ENCODE measurements at regions of chr1 and their contacts with region 1.

Region 1: GRCh38 chr1:25905680-25906643 is at the start of gene STMN1:
- DNase-seq: peak; percentile 94
- H3K4me3 Mint-ChIP-seq: peak within 1 kb of the TSS; percentile 94
- H3K27ac Mint-ChIP-seq: peak within 1 kb of the TSS; percentile 90
- H3K4me1 Mint-ChIP-seq: peaks cover 29% of the 10 kb centered on the region
- H3K27me3 Mint-ChIP-seq: no peaks in the 10 kb centered on the region
- total RNA-seq, gene STMN1: 708 to 746 TPM

Region 2: DNA sequence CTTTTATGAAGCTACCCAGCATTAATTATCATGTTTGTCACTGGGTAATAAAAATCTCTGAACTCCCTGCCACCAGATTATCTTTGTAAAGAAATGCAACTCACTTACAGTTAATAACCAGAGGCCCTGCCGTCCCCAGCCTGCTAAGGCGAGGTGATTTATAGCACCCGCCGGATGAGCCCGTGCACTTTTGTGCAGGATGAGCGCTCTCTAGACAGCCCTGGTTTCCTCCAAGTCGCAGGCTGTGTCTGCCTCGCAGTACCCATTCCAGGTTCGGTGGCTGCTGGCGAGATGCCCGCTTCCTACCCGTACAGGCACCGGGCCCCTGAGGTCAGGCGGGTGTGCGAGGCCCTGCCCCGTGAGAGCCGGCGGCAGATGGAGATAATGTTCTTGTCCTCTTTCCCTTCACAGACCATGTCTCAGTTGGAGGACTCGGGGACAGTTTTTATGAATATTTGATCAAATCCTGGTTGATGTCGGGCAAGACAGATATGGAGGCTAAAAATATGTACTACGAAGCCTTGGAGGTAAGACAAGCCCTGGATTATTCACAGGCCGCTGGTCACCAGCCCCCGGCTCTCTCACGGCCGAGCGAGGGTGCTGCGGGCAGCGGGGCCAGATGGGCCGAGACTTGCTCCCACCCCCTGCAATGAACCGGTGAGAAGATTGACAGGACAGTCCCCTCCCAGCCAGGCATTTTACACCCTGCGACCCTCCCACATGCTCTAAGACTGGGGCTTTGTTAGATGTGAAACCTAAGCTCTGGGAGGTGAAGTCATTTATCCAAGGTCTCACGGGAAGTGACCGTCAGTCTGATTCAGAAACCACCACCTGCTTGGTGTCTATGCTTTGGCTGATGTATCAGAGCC is 134.5 kb before region 1 on chr1:
- CTCF ChIA-PET with region 1: no interaction called
- intact Hi-C with region 1: no loop called
- DNase-seq: peak; percentile 69
- H3K4me3 Mint-ChIP-seq: peak overlapping the region; percentile 49
- H3K27ac Mint-ChIP-seq: peak overlapping the region; percentile 62
- H3K4me1 Mint-ChIP-seq: peaks cover 81% of the 10 kb centered on the region
- H3K27me3 Mint-ChIP-seq: no peaks in the 10 kb centered on the region

Region 3: DNA sequence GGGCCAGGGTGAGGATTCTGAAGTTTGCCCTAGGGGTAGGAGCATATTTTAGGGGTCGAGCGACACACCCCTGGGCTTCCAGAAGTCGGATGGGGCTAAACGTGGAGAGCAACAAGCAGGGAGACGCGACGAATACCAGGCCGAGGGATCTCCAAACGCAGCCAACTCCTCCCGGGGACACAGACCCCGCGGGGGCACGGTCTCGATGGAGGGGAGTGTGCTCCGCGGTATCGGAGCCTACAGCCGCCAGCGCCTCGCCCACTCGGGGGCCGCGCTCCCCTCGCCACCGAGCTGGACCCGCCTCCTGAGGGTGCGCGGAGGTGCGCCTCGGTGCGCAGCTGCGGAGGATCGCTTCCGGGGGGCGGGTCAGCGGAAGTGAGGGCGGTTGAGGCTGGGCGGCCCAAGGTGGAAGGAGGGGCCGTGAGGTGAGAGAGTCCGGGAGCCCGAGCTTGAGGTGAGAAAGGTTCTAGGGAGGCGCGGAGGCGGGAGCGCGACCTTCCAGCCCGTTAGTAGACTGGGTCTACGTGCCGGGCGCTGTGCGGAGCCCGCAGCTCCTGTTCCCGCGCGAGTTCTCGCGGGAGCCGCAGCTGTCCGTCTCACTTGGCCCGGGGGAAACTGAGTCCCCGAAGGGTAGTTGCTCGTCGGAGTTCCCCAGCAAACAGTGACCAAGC is 86.3 kb before region 1 on chr1 and contains the start of gene MTFR1L:
- CTCF ChIA-PET with region 1: no interaction called
- intact Hi-C with region 1: loop called (anchors 5 kb)
- DNase-seq: peak; percentile 94
- H3K4me3 Mint-ChIP-seq: peak within 1 kb of the TSS; percentile 86
- H3K27ac Mint-ChIP-seq: peak within 1 kb of the TSS; percentile 88
- H3K4me1 Mint-ChIP-seq: peaks cover 36% of the 10 kb centered on the region
- H3K27me3 Mint-ChIP-seq: no peaks in the 10 kb centered on the region
- total RNA-seq, gene MTFR1L: 22.2 to 23.5 TPM

Region 4: GRCh38 chr1:25895365-25895993 is 10.5 kb before region 1 on chr1:
- CTCF ChIA-PET with region 1: interaction called, 17 read pairs
- intact Hi-C with region 1: no loop called
- DNase-seq: peak; percentile 92
- H3K4me3 Mint-ChIP-seq: no peak overlapping the region
- H3K27ac Mint-ChIP-seq: no peak overlapping the region
- H3K4me1 Mint-ChIP-seq: peaks cover 17% of the 10 kb centered on the region
- H3K27me3 Mint-ChIP-seq: no peaks in the 10 kb centered on the region

Region 5: GRCh38 chr1:25971066-25971810 is 65.3 kb after region 1 on chr1:
- CTCF ChIA-PET with region 1: no interaction called
- intact Hi-C with region 1: loop called (anchors 1 kb)
- DNase-seq: peak; percentile 33
- H3K4me3 Mint-ChIP-seq: no peak overlapping the region
- H3K27ac Mint-ChIP-seq: peak overlapping the region; percentile 89
- H3K4me1 Mint-ChIP-seq: peaks cover 31% of the 10 kb centered on the region
- H3K27me3 Mint-ChIP-seq: no peaks in the 10 kb centered on the region

Region 6: GRCh38 chr1:26472901-26473845 is 567.2 kb after region 1 on chr1:
- CTCF ChIA-PET with region 1: no interaction called
- intact Hi-C with region 1: loop called (anchors 5 kb)
- DNase-seq: peak; percentile 96
- H3K4me3 Mint-ChIP-seq: peak overlapping the region; percentile 87
- H3K27ac Mint-ChIP-seq: peak overlapping the region; percentile 71
- H3K4me1 Mint-ChIP-seq: peaks cover 49% of the 10 kb centered on the region
- H3K27me3 Mint-ChIP-seq: no peaks in the 10 kb centered on the region

Region 7: DNA sequence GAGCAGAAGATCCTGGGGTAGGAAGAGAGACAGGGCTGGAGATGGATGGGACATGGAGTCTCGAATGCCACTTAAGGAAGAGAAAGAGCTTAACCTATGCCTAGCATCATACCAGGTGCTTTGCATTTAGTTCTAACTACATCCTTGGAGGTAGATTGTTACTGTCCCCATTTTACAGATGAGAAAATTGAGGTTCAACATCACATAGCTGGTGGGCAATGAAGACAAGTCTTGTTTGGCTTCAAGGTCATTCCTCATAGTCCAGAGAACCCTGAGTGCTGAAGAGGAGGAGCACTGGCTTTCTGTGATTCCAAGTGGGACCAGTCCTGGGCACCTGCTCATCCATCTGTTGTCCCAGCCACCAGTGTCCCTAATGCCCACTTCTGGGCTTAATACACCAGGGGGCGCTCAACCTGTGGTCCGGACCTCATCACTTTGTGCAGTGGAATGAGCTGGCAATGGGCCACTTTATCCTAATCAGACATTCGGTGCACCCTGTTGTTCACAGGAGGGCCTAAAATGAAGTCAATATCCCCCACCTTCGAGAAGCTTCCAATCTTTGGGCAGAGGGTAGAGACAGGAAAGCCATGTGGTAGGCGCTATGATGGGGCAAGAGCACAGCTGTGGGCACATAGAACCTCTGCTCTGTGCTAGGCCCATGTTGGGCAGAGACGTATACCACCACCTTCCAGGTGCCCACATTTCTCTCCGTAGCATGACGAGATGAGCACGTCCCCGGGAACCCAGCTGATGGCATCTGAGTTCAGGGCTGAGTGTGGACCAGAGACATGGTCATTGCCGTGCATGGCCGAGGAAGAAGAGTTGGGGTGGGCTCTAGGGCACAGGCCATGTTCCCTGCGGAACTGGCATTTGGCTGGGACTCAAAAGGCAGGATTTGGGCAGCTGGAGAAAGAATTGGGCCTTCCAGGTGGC is 632.8 kb after region 1 on chr1:
- CTCF ChIA-PET with region 1: no interaction called
- intact Hi-C with region 1: no loop called
- DNase-seq: peak; percentile 70
- H3K4me3 Mint-ChIP-seq: no peak overlapping the region
- H3K27ac Mint-ChIP-seq: no peak overlapping the region
- H3K4me1 Mint-ChIP-seq: peaks cover 74% of the 10 kb centered on the region
- H3K27me3 Mint-ChIP-seq: no peaks in the 10 kb centered on the region

Region 8: DNA sequence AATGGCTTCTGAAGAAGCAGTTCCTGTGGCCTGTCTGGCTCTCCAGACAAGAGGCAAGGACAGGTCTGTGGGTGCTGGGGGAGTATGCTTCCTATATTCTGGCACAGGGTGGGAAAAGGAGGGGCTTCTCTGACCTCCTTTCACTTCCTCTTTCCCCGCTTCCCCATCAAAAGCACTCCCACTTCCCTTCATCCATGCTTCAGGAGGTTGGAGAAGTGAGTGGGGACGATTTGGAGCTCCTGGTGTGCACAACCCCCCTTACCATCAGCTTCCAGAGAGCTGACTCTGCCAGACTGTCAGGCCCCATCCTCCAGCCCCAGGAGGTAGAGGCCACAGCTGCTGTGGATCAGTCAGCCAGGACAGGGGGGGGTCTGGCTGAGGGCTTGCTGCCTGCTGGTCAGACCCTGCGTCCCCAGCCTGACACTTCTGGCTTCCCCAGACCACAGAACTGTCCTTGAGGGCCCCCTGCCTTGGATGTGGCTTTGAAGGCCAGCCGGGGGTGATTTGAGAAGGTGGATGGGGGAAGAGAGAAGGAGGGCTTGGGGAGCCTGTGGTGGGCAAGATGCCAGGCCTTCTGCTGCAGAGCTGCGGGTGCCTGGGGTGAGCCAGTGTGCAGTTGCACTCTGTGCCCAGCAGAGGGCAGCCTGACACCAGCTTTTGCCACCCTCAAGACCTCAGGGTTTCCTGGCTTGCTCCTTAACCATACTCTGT is 1394.5 kb after region 1 on chr1:
- CTCF ChIA-PET with region 1: no interaction called
- intact Hi-C with region 1: no loop called
- DNase-seq: peak; percentile 84
- H3K4me3 Mint-ChIP-seq: no peak overlapping the region
- H3K27ac Mint-ChIP-seq: no peak overlapping the region
- H3K4me1 Mint-ChIP-seq: no peaks in the 10 kb centered on the region
- H3K27me3 Mint-ChIP-seq: no peaks in the 10 kb centered on the region

Measured in activated naive CD4-positive, alpha-beta T cell treated with anti-CD3 and anti-CD28 coated beads for 36 hours (primary cell).